Gastrocnemius medialis (tissue), 4 donors: ENCODE measurements at regions of chr11 and their contacts with region 1.

Region 1: DNA sequence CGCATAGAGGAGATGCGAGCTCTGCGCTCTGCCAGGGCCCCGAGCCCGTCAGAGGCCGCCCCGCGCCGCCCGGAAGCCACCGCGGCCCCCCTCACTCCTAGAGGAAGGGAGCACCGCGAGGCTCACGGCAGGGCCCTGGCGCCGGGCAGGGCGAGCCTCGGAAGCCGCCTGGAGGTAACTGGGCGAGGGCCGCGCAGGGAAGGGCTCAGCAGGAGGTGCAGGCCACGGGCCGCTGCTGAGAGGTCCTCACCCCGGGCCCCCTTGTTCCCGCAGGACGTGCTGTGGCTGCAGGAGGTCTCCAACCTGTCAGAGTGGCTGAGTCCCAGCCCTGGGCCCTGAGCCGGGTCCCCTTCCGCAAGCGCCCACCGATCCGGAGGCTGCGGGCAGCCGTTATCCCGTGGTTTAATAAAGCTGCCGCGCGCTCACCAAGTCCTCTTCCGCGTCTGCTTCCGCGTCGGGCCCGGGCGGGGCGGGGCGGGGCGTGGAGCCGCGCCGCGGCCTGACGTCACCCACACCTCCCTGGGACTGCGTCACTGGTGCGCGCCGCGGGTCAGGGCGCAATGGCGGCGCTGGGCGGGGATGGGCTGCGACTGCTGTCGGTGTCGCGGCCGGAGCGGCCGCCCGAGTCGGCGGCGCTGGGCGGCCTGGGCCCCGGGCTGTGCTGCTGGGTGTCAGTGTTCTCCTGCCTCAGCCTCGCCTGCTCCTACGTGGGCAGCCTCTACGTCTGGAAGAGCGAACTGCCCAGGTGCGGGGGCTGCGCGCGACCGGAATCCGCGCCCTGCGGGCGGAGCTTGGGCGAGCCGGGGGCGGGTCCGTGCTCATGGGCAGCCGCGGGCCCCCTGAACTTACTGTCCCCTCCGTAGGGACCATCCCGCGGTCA is at the start of gene RCE1:
- DNase-seq: peak; percentile 68 to 86
- ATAC-seq: peak; percentile 91 to 92
- H3K4me3 ChIP-seq: peak within 1 kb of the TSS; percentile 95 to 99 (median 98)
- H3K27ac ChIP-seq: peak within 1 kb of the TSS; percentile 95 to 98 (median 98)
- H3K4me1 ChIP-seq: peaks cover 18 to 25% of the 10 kb centered on the region in 2 donors
- H3K27me3 ChIP-seq: no peaks in the 10 kb centered on the region
- CTCF ChIP-seq: peak in 2 of 5 experiments; percentile 18 to 33
- POLR2A ChIP-seq: peak; percentile 86 to 93
- total RNA-seq, gene RCE1: 6.6 to 11.8 (median 8.3) TPM

Region 2: GRCh38 chr11:66344550-66345315 is 498.4 kb before region 1 on chr11 and contains the start of gene BRMS1:
- in situ Hi-C with region 1: no loop called
- intact Hi-C with region 1: loop called (anchors 1 kb)
- DNase-seq: peak; percentile 98
- ATAC-seq: peak; percentile 83 to 86
- H3K4me3 ChIP-seq: peak within 1 kb of the TSS; percentile 83 to 97 (median 93)
- H3K27ac ChIP-seq: peak within 1 kb of the TSS; percentile 80 to 91 (median 87)
- H3K4me1 ChIP-seq: peaks cover 35 to 36% of the 10 kb centered on the region in 2 donors
- H3K27me3 ChIP-seq: no peaks in the 10 kb centered on the region
- CTCF ChIP-seq: peak in 4 of 5 experiments; percentile 35 to 57 (median 48)
- POLR2A ChIP-seq: peak; percentile 92 to 96
- total RNA-seq, gene BRMS1: 40.1 to 73.5 (median 64.8) TPM

Region 3: DNA sequence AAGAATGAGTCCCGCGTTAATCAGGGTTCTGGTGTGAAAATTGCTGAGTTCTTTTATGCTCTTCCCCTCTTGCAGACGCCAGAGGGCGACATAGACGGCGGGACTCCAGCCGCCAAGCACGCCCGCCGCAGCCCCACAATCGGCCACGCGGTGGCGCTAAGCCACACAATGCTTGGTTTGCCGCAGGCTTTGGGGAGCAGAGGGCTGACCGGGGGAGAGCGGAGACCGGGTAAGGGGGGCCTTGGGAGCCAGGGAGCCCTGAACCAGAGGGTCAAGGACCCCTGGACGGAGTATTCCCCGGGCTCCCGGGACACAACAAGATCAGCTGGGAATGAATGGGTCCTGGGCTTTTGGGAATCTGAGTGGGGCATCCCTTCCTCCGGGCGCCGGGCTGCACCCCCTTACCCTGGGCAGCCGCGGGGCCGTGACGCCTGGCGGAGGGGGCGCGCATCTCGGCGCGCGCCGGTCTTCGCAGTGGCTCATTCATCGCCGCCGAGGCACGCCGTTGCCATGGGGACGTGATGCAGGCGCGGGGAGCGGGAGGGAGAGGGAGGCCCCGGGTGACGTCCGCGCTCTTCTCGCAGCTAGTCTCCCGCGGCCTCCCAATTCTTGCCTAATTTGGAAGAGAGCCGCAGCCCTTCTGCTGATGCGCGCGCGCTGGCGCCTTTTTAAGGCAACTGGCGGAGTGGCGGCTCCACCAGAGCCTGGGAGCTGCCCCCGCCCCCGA is 434.5 kb before region 1 on chr11:
- in situ Hi-C with region 1: loop called in 3 of 4 experiments (anchors 10 to 25 kb)
- intact Hi-C with region 1: no loop called
- DNase-seq: peak; percentile 57 to 74
- ATAC-seq: peak; percentile 84 to 93
- H3K4me3 ChIP-seq: peak overlapping the region; percentile 9 to 45 (median 36)
- H3K27ac ChIP-seq: no peak overlapping the region
- H3K4me1 ChIP-seq: no peaks in the 10 kb centered on the region
- H3K27me3 ChIP-seq: peaks cover 0 to 10% (median 0%) of the 10 kb centered on the region in 3 donors
- CTCF ChIP-seq: peak; percentile 64 to 100 (median 99)
- POLR2A ChIP-seq: no peak

Region 4: GRCh38 chr11:66592457-66593302 is 250.5 kb before region 1 on chr11 and contains the starts of genes CCDC87 and CCS:
- in situ Hi-C with region 1: loop called in 2 of 4 experiments (anchors 25 kb)
- intact Hi-C with region 1: loop called (anchors 10 kb)
- DNase-seq: peak; percentile 96 to 97
- ATAC-seq: peak; percentile 97 to 98
- H3K4me3 ChIP-seq: peak within 1 kb of the TSS; percentile 63 to 98 (median 82)
- H3K27ac ChIP-seq: peak within 1 kb of the TSS; percentile 82 to 91 (median 88)
- H3K4me1 ChIP-seq: peaks cover 12 to 21% of the 10 kb centered on the region in 2 donors
- H3K27me3 ChIP-seq: no peaks in the 10 kb centered on the region
- CTCF ChIP-seq: peak; percentile 79 to 94 (median 86)
- POLR2A ChIP-seq: peak; percentile 88
- total RNA-seq, gene CCDC87: 0.13 to 0.41 TPM in 2 of 4 donors, not detected in the others
- total RNA-seq, gene CCS: 9.0 to 12.3 (median 11.7) TPM

Region 5: GRCh38 chr11:66855574-66856495 is 12.7 kb after region 1 on chr11:
- in situ Hi-C with region 1: no loop called
- intact Hi-C with region 1: loop called (anchors 1 kb)
- DNase-seq: peak; percentile 90 to 94
- ATAC-seq: peak; percentile 87 to 88
- H3K4me3 ChIP-seq: peak overlapping the region; percentile 59 to 96 (median 78)
- H3K27ac ChIP-seq: peak overlapping the region; percentile 82 to 97 (median 88)
- H3K4me1 ChIP-seq: peaks cover 8 to 9% of the 10 kb centered on the region in 2 donors
- H3K27me3 ChIP-seq: no peaks in the 10 kb centered on the region
- CTCF ChIP-seq: no peak
- POLR2A ChIP-seq: peak; percentile 62 to 75

Region 6: GRCh38 chr11:66883016-66883968 is 40.2 kb after region 1 on chr11:
- in situ Hi-C with region 1: no loop called
- intact Hi-C with region 1: loop called (anchors 2 kb)
- DNase-seq: peak; percentile 36 to 73
- ATAC-seq: peak; percentile 68 to 79
- H3K4me3 ChIP-seq: peak overlapping the region; percentile 21 to 45 (median 42)
- H3K27ac ChIP-seq: peak overlapping the region in 3 of 4 donors; percentile 64 to 81 (median 71)
- H3K4me1 ChIP-seq: peaks cover 9 to 51% of the 10 kb centered on the region in 2 donors
- H3K27me3 ChIP-seq: no peaks in the 10 kb centered on the region
- CTCF ChIP-seq: peak; percentile 66 to 82 (median 76)
- POLR2A ChIP-seq: no peak

Region 7: GRCh38 chr11:66958232-66958955 is 115.3 kb after region 1 on chr11 and contains the start of gene PC:
- in situ Hi-C with region 1: no loop called
- intact Hi-C with region 1: loop called (anchors 5 kb)
- DNase-seq: peak; percentile 100
- ATAC-seq: peak; percentile 96 to 97
- H3K4me3 ChIP-seq: peak within 1 kb of the TSS; percentile 59 to 82 (median 62)
- H3K27ac ChIP-seq: peak within 1 kb of the TSS; percentile 83 to 91 (median 87)
- H3K4me1 ChIP-seq: peaks cover 5 to 22% of the 10 kb centered on the region in 2 donors
- H3K27me3 ChIP-seq: no peaks in the 10 kb centered on the region
- CTCF ChIP-seq: no peak
- POLR2A ChIP-seq: peak; percentile 90 to 95
- total RNA-seq, gene PC: 13.1 to 67.6 (median 32.1) TPM